RWPE1 (cell line): ENCODE measurements at regions of chr5 and their contacts with region 1.

Region 1: GRCh38 chr5:145812877-145813276 is 22.3 kb downstream of the PRELID2 start:
- DNase-seq: no peak
- H3K27ac ChIP-seq: no peak overlapping the region
- CTCF ChIP-seq: no peak

Region 2: GRCh38 chr5:145797336-145797735 is 15.5 kb before region 1 on chr5:
- CTCF ChIA-PET with region 1: no interaction called
- POLR2A ChIA-PET with region 1: no interaction called
- DNase-seq: no peak
- H3K27ac ChIP-seq: no peak overlapping the region
- CTCF ChIP-seq: no peak

Region 3: GRCh38 chr5:145847499-145848497 is 34.9 kb after region 1 on chr5:
- CTCF ChIA-PET with region 1: no interaction called
- POLR2A ChIA-PET with region 1: no interaction called
- DNase-seq: peak; percentile 82
- H3K27ac ChIP-seq: no peak overlapping the region
- CTCF ChIP-seq: no peak

Region 4: DNA sequence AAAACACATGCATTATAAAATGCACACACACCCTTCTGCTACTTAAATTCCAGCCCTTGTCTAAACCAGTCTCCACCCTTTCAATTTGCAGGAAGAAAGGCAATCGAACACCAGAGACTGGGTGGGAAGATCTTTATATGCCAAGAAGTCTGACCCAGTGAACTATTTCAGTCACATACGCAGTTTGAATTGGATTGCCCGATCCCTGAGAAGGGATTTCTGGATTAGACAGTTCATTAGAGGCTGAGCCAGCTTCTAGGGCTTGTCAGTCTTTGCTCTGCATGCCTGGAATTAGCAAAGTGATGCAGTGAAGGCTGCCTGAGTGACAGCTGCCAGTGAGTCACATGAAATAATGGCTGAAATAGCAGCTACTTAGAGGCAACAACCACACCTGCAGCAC is 905.7 kb after region 1 on chr5:
- CTCF ChIA-PET with region 1: interaction called, 12 read pairs
- POLR2A ChIA-PET with region 1: no interaction called
- DNase-seq: peak; percentile 71
- H3K27ac ChIP-seq: no peak overlapping the region; the same call in 1 of the 2 replicates
- CTCF ChIP-seq: no peak